ENCODE measurements at regions of chr12 and their contacts with region 1.

Region 1: GRCh38 chr12:104381731-104382480 is 74.8 kb upstream of the CHST11 start:
- DNase-seq: peak; percentile 88
- ATAC-seq: peak; percentile 95
- H3K4me3 Mint-ChIP-seq: peak overlapping the region; percentile 47
- H3K27ac Mint-ChIP-seq: no peak overlapping the region
- H3K4me1 Mint-ChIP-seq: peaks cover 10% of the 10 kb centered on the region
- H3K27me3 Mint-ChIP-seq: no peaks in the 10 kb centered on the region
- CTCF ChIP-seq: peak; percentile 91

Region 2: GRCh38 chr12:104201238-104202001 is 180.5 kb before region 1 on chr12:
- CTCF ChIA-PET with region 1: interaction called, 10 read pairs
- POLR2A ChIA-PET with region 1: no interaction called
- DNase-seq: peak; percentile 50
- ATAC-seq: peak; percentile 97
- H3K4me3 Mint-ChIP-seq: no peak overlapping the region
- H3K27ac Mint-ChIP-seq: no peak overlapping the region
- H3K4me1 Mint-ChIP-seq: peaks cover 11% of the 10 kb centered on the region
- H3K27me3 Mint-ChIP-seq: no peaks in the 10 kb centered on the region
- CTCF ChIP-seq: peak; percentile 57; the same call in 1 of the 2 replicates

Region 3: DNA sequence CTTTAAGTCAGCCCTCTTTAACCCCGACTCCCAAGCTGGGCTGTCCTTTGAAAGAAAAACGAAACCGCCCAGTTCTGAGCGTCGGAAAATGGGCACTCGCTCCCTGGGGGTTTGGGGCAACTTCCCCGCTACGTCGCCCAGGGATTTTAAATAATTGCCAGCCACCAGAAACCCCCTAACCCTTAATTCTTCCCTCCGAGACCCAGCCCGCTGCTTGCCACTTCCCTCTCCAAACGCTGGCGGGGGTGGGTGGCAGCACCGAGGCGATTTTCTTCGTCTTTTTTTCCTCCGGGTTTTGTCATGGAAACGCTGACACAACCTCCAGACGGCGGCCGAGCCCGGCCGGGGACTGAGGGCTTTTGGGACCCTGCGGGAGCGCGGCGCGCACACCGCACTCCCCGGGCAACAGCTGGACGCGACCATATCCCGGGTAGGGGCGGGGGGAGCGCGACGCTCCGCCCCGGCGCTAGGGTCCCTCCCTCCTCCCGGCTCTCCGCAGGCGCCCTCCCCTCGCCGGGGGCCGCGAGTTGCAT is 74.6 kb after region 1 on chr12 and contains the start of gene CHST11:
- CTCF ChIA-PET with region 1: interaction called, 29 read pairs
- POLR2A ChIA-PET with region 1: interaction called, 4 read pairs
- DNase-seq: peak; percentile 93
- ATAC-seq: peak; percentile 82
- H3K4me3 Mint-ChIP-seq: peak within 1 kb of the TSS; percentile 97
- H3K27ac Mint-ChIP-seq: peak within 1 kb of the TSS; percentile 89
- H3K4me1 Mint-ChIP-seq: peaks cover 49% of the 10 kb centered on the region
- H3K27me3 Mint-ChIP-seq: peaks cover 58% of the 10 kb centered on the region
- CTCF ChIP-seq: no peak
- total RNA-seq, gene CHST11: 20.4 to 24.2 TPM (median 23.2 TPM) in 3 replicates

Region 4: GRCh38 chr12:104493496-104493895 is 111.6 kb after region 1 on chr12:
- CTCF ChIA-PET with region 1: no interaction called
- POLR2A ChIA-PET with region 1: no interaction called
- DNase-seq: no peak
- ATAC-seq: no peak
- H3K4me3 Mint-ChIP-seq: no peak overlapping the region
- H3K27ac Mint-ChIP-seq: no peak overlapping the region
- H3K4me1 Mint-ChIP-seq: peaks cover 12% of the 10 kb centered on the region
- H3K27me3 Mint-ChIP-seq: no peaks in the 10 kb centered on the region
- CTCF ChIP-seq: no peak

Region 5: DNA sequence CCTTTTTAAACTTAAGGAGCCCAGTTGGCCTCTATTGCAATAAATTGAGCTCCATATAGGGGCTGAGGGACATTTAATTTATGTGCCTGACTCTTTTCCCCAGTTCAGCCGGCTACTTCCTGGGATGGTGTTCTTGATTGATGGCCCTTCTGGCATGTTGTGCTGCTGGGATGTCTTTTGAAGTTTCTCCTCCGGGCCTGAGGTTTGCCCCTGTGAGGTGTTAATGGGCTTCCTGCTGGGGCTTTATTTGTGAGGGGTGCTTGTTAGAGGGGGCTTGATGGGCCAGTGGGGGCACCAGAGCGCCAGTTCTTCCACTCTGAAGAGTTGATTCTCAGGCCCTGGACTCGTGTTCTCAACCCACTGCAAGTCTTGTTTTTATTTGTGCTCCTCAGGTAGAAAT is 144.4 kb after region 1 on chr12:
- CTCF ChIA-PET with region 1: interaction called, 14 read pairs
- POLR2A ChIA-PET with region 1: no interaction called
- DNase-seq: peak; percentile 59
- ATAC-seq: peak; percentile 86
- H3K4me3 Mint-ChIP-seq: no peak overlapping the region
- H3K27ac Mint-ChIP-seq: no peak overlapping the region
- H3K4me1 Mint-ChIP-seq: peaks cover 71% of the 10 kb centered on the region
- H3K27me3 Mint-ChIP-seq: no peaks in the 10 kb centered on the region
- CTCF ChIP-seq: no peak

Region 6: GRCh38 chr12:104653730-104654664 is 272.1 kb after region 1 on chr12:
- CTCF ChIA-PET with region 1: interaction called, 12 read pairs
- POLR2A ChIA-PET with region 1: no interaction called
- DNase-seq: peak; percentile 48
- ATAC-seq: peak; percentile 72
- H3K4me3 Mint-ChIP-seq: no peak overlapping the region
- H3K27ac Mint-ChIP-seq: no peak overlapping the region
- H3K4me1 Mint-ChIP-seq: peaks cover 75% of the 10 kb centered on the region
- H3K27me3 Mint-ChIP-seq: no peaks in the 10 kb centered on the region
- CTCF ChIP-seq: peak; percentile 63; the same call in 1 of the 2 replicates

Region 7: DNA sequence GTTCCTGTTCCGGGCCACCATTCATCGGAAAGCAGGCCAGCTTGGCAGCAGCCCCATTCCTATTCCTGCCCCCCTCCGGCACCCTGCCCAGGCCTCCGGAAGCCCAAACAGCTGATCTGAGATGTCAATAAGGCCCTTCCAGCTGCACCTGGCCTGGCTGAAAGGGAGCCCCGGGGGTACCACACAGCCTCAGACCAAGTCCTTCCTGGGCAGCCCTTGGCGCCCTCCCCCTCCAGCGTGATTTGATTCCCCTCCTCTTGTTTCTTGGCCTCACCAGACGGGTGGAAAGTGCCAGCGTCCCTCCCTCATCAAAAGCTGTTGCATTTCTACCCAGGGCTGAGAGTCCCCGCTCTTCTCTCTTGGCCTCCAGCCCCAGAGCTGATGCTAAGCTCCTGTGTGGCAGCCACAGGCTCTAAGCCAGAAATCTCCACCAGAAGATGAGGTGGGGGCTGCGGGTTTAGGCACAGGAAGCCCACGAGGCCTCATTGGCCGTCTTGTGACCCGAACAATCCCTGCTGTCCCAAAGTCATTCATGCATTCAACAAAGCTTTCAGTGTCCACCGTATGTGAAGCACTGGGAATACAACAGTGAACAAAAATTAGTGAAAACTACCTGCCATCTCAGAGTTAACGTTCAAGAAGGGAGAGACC is 360.8 kb after region 1 on chr12:
- CTCF ChIA-PET with region 1: interaction called, 11 read pairs
- POLR2A ChIA-PET with region 1: no interaction called
- DNase-seq: no peak
- ATAC-seq: peak; percentile 15; the same call in 1 of the 2 replicates
- H3K4me3 Mint-ChIP-seq: no peak overlapping the region
- H3K27ac Mint-ChIP-seq: peak overlapping the region; percentile 15; the same call in 1 of the 2 replicates
- H3K4me1 Mint-ChIP-seq: peaks cover 52% of the 10 kb centered on the region
- H3K27me3 Mint-ChIP-seq: no peaks in the 10 kb centered on the region
- CTCF ChIP-seq: no peak

Region 8: GRCh38 chr12:105053116-105053572 is 671.2 kb after region 1 on chr12:
- CTCF ChIA-PET with region 1: interaction called, 23 read pairs
- POLR2A ChIA-PET with region 1: no interaction called
- DNase-seq: peak; percentile 79
- ATAC-seq: peak; percentile 82
- H3K4me3 Mint-ChIP-seq: no peak overlapping the region
- H3K27ac Mint-ChIP-seq: no peak overlapping the region
- H3K4me1 Mint-ChIP-seq: no peaks in the 10 kb centered on the region; the same call in 1 of the 2 replicates
- H3K27me3 Mint-ChIP-seq: no peaks in the 10 kb centered on the region
- CTCF ChIP-seq: peak; percentile 75